Calu3 (cell line): ENCODE measurements at regions of chr10 and their contacts with region 1.

Region 1: GRCh38 chr10:119028900-119029612 is 458 bp upstream of the NANOS1 start:
- DNase-seq: peak; percentile 89
- H3K4me3 Mint-ChIP-seq: peak overlapping the region; percentile 46
- H3K27ac Mint-ChIP-seq: no peak overlapping the region
- H3K4me1 Mint-ChIP-seq: peaks cover 35% of the 10 kb centered on the region
- H3K27me3 Mint-ChIP-seq: no peaks in the 10 kb centered on the region
- CTCF ChIP-seq: no peak

Region 2: GRCh38 chr10:118568327-118568848 is 460.7 kb before region 1 on chr10:
- CTCF ChIA-PET with region 1: no interaction called
- intact Hi-C with region 1: loop called (anchors 5 kb)
- DNase-seq: peak; percentile 45
- H3K4me3 Mint-ChIP-seq: no peak overlapping the region
- H3K27ac Mint-ChIP-seq: no peak overlapping the region
- H3K4me1 Mint-ChIP-seq: no peaks in the 10 kb centered on the region
- H3K27me3 Mint-ChIP-seq: peaks cover 29% of the 10 kb centered on the region
- CTCF ChIP-seq: peak; percentile 19

Region 3: GRCh38 chr10:118832241-118832651 is 196.8 kb before region 1 on chr10:
- CTCF ChIA-PET with region 1: no interaction called
- intact Hi-C with region 1: loop called (anchors 10 kb)
- DNase-seq: no peak
- H3K4me3 Mint-ChIP-seq: no peak overlapping the region
- H3K27ac Mint-ChIP-seq: no peak overlapping the region
- H3K4me1 Mint-ChIP-seq: no peaks in the 10 kb centered on the region
- H3K27me3 Mint-ChIP-seq: peaks cover 21% of the 10 kb centered on the region
- CTCF ChIP-seq: no peak

Region 4: GRCh38 chr10:118911361-118911760 is 117.7 kb before region 1 on chr10:
- CTCF ChIA-PET with region 1: no interaction called
- intact Hi-C with region 1: loop called (anchors 10 kb)
- DNase-seq: peak; percentile 43
- H3K4me3 Mint-ChIP-seq: no peak overlapping the region
- H3K27ac Mint-ChIP-seq: peak overlapping the region; percentile 23
- H3K4me1 Mint-ChIP-seq: peaks cover 52% of the 10 kb centered on the region
- H3K27me3 Mint-ChIP-seq: no peaks in the 10 kb centered on the region
- CTCF ChIP-seq: no peak

Region 5: DNA sequence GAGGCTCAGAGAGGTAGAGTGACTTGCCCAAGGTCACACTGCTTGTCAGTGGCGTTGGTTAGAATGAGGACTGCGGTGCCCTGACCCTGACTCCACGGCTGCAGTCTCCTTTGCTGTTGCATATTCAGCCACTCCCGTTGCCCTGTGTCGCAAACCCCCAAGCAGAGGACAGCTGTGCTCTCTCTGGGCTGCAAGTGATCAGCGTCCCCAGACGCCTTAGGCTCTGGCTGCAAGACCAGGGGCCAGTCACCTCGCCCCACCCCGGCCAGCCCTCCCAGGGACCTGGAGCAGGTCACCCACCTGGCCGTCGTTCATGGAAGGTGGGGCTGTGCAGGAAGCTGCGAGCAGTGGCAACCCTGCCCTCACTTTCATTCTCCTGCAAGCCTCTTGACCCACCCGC is 51.2 kb before region 1 on chr10:
- CTCF ChIA-PET with region 1: interaction called, 10 read pairs
- intact Hi-C with region 1: no loop called
- DNase-seq: no peak
- H3K4me3 Mint-ChIP-seq: no peak overlapping the region
- H3K27ac Mint-ChIP-seq: no peak overlapping the region
- H3K4me1 Mint-ChIP-seq: no peaks in the 10 kb centered on the region
- H3K27me3 Mint-ChIP-seq: no peaks in the 10 kb centered on the region
- CTCF ChIP-seq: no peak

Region 6: DNA sequence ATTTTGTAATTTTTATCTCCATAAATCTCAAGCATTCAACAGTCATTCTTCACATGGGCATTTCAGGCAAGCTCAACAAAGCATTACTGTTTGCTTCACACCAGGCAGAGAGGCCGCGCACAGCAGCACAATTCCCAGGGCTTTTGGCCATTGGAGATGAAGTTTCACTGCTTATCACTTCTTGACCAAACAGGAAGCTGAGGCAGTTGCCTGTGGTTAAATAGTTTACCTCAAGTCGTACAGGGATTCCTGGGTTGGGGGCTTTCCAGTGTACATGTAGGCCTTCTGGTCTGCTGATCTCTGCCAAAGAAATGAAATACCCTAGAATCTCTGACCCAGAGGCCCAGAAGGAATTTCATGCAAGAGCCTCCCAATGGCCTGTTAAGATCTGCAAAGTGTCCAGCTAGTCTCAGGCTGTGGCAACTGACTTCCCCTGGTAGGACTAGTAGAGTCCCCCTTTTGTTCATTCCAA is 160.8 kb after region 1 on chr10:
- CTCF ChIA-PET with region 1: no interaction called
- intact Hi-C with region 1: no loop called
- DNase-seq: no peak
- H3K4me3 Mint-ChIP-seq: no peak overlapping the region
- H3K27ac Mint-ChIP-seq: no peak overlapping the region
- H3K4me1 Mint-ChIP-seq: no peaks in the 10 kb centered on the region
- H3K27me3 Mint-ChIP-seq: no peaks in the 10 kb centered on the region
- CTCF ChIP-seq: no peak